HepG2 (cell line): ENCODE measurements at regions of chr6 and their contacts with region 1.

Region 1: GRCh38 chr6:19851241-19852089 is 14.3 kb downstream of the ID4 start:
- DNase-seq: peak; percentile 87
- ATAC-seq: peak; percentile 98
- H3K4me3 ChIP-seq: peak overlapping the region; percentile 27 to 65 (median 52)
- H3K27ac ChIP-seq: no peak overlapping the region
- H3K4me1 ChIP-seq: peaks cover 23% of the 10 kb centered on the region
- H3K27me3 ChIP-seq: peaks cover 2 to 14% of the 10 kb centered on the region in 2 experiments; a peak in 2 of 5 replicates
- CTCF ChIP-seq: peak; percentile 93
- EP300 ChIP-seq: no peak
- POLR2A ChIP-seq: no peak
- RAD21 ChIP-seq: peak; percentile 91

Region 2: GRCh38 chr6:18997375-18997826 is 854.1 kb before region 1 on chr6:
- CTCF ChIA-PET with region 1: interaction called, 4 read pairs
- POLR2A ChIA-PET with region 1: no interaction called
- in situ Hi-C with region 1: no loop called
- intact Hi-C with region 1: loop called (anchors 1 kb)
- DNase-seq: peak; percentile 58
- ATAC-seq: peak; percentile 100
- H3K4me3 ChIP-seq: no peak overlapping the region
- H3K27ac ChIP-seq: no peak overlapping the region
- H3K4me1 ChIP-seq: no peaks in the 10 kb centered on the region
- H3K27me3 ChIP-seq: no peaks in the 10 kb centered on the region
- CTCF ChIP-seq: peak; percentile 75
- EP300 ChIP-seq: no peak
- POLR2A ChIP-seq: no peak
- RAD21 ChIP-seq: no peak; the same call in 1 of the 2 replicates

Region 3: DNA sequence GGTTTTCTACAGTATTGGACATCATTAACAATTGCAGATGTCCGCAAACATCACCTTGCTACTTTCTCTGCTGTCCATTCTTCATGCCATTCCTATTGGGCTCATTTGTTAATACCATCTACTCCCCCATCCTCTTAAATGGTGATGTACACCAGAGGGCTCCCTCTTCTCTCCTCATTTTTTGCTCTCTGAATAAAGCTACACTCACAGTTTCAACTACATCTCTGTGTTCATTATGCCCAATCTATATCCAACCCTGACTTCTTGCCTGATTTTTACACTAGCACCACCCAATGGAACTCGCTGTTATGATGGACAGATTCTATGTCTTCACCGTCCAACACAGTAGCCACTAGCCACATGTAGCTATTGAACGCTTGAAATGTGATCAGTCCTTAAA is 302.4 kb before region 1 on chr6:
- CTCF ChIA-PET with region 1: no interaction called
- POLR2A ChIA-PET with region 1: no interaction called
- in situ Hi-C with region 1: no loop called
- intact Hi-C with region 1: loop called (anchors 2 kb)
- DNase-seq: no peak
- ATAC-seq: no peak
- H3K4me3 ChIP-seq: no peak overlapping the region
- H3K27ac ChIP-seq: no peak overlapping the region
- H3K4me1 ChIP-seq: no peaks in the 10 kb centered on the region
- H3K27me3 ChIP-seq: peaks cover 0 to 2% of the 10 kb centered on the region in 2 experiments; a peak in 1 of 5 replicates
- CTCF ChIP-seq: no peak
- EP300 ChIP-seq: no peak
- POLR2A ChIP-seq: no peak
- RAD21 ChIP-seq: no peak

Region 4: DNA sequence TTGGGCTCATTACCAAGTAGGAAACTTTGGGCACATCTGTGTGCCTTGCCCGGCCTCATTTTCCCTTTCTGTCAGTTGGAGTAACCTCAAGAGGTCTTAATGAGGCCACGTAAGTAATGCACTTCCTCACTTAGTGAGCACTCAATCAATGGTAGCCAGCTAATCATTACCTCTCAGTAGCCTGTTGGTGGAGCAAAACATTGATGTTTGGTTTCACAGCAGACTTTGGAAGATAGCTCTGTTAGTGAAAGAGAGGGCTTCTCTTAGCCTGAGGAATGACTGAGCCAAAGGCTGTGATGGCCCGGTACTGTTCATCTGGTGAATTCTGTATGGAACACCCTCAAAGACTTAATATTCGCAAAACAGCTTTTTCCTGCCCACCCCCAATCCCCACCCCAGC is 70.2 kb before region 1 on chr6:
- CTCF ChIA-PET with region 1: no interaction called
- POLR2A ChIA-PET with region 1: no interaction called
- in situ Hi-C with region 1: no loop called
- intact Hi-C with region 1: loop called (anchors 2 kb)
- DNase-seq: peak; percentile 59
- ATAC-seq: peak; percentile 99
- H3K4me3 ChIP-seq: 0 out of 6 replicates have a peak overlapping the region, but pooled peaks of 1 of the 3 experiments have one; percentile 3
- H3K27ac ChIP-seq: no peak overlapping the region
- H3K4me1 ChIP-seq: peaks cover 15% of the 10 kb centered on the region
- H3K27me3 ChIP-seq: no peaks in the 10 kb centered on the region
- CTCF ChIP-seq: peak; percentile 48
- EP300 ChIP-seq: no peak
- POLR2A ChIP-seq: no peak
- RAD21 ChIP-seq: no peak

Region 5: GRCh38 chr6:19812512-19813119 is 38.8 kb before region 1 on chr6:
- CTCF ChIA-PET with region 1: interaction called, 15 read pairs
- POLR2A ChIA-PET with region 1: no interaction called
- in situ Hi-C with region 1: no loop called
- intact Hi-C with region 1: loop called (anchors 1 kb)
- DNase-seq: peak; percentile 67
- ATAC-seq: peak; percentile 82
- H3K4me3 ChIP-seq: 0 out of 6 replicates have a peak overlapping the region, but pooled peaks of 1 of the 3 experiments have one; percentile 59
- H3K27ac ChIP-seq: no peak overlapping the region
- H3K4me1 ChIP-seq: peaks cover 26% of the 10 kb centered on the region
- H3K27me3 ChIP-seq: no peaks in the 10 kb centered on the region
- CTCF ChIP-seq: peak; percentile 67
- EP300 ChIP-seq: no peak
- POLR2A ChIP-seq: no peak
- RAD21 ChIP-seq: peak; percentile 44; the same call in 1 of the 2 replicates